ENCODE measurements at regions of chr15 and their contacts with region 1.

Region 1: DNA sequence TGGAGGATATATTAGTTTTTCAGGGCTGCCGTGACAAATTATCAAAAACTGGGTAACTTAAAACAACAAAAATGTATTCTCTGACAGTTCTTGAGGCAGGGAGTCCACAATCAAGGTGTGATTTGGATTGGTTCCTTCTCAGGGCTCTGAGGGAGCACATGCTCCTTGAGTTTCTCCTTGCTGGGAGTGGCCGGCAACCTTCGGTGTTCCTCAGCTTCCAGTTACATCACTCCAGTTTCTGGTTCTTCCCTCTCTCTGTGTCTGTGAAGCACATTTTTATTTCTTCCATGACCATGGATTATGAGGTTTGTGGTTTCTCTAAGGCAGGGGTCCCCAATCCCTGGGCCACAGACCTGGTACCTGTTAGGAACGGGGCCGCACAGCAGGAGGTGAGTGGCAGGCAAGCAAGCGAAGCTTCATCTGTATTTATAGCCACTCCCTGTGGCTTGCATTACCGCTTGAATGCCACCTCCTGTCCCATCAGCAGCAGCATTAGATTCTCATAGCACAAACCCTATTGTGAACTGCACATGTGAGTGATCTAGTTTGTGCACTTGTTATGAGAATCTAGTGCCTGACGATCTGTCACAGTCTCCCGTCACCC is 24.3 kb downstream of the LRRC28 start:
- DNase-seq: no peak
- H3K4me3 ChIP-seq: no peak overlapping the region
- H3K27ac ChIP-seq: no peak overlapping the region
- H3K4me1 ChIP-seq: no peaks in the 10 kb centered on the region
- H3K27me3 ChIP-seq: no peaks in the 10 kb centered on the region
- CTCF ChIP-seq: no peak
- POLR2A ChIP-seq: no peak

Region 2: DNA sequence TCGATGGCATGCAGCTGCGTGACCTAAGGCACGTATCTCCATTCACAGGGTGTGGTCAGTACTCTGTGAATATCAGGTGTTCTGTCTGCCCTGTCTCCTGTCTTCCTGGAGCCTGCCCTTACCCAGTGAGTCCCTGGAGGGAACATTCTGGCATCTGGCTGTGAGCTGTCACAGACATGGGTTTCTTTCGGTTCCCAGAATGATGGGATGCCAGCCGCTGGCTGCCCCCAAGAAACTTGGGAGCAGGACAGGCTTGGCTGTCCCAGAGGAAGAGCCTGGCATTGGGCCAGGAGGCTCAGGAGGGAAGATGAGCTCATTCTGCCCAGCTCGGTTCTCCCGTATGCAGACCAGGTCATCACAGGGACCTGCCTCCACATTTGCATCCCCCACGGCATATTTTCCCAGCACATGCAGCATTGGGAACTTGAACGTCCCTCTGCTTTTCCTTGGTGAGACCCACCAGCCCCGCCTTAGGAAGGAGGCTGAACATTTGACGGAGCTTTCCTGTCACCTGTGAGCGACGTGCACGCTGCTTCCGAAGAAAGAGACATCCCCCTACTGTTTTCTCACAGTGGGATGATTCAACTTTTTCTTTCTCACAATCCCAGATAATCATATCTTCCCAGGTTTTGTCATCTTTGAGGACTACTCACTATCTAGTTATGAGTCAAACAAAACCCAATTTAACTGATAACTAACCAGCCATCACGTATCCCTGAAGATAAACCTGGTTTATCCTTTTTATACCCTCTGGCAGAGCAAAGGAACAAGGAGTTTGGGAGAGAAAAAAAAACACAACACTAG is 246.1 kb before region 1 on chr15:
- intact Hi-C with region 1: no loop called
- DNase-seq: peak in 3 of 7 donors; percentile 30 to 53 (median 31)
- H3K4me3 ChIP-seq: no peak overlapping the region
- H3K27ac ChIP-seq: no peak overlapping the region
- H3K4me1 ChIP-seq: no peaks in the 10 kb centered on the region
- H3K27me3 ChIP-seq: no peaks in the 10 kb centered on the region
- CTCF ChIP-seq: no peak
- POLR2A ChIP-seq: no peak

Region 3: DNA sequence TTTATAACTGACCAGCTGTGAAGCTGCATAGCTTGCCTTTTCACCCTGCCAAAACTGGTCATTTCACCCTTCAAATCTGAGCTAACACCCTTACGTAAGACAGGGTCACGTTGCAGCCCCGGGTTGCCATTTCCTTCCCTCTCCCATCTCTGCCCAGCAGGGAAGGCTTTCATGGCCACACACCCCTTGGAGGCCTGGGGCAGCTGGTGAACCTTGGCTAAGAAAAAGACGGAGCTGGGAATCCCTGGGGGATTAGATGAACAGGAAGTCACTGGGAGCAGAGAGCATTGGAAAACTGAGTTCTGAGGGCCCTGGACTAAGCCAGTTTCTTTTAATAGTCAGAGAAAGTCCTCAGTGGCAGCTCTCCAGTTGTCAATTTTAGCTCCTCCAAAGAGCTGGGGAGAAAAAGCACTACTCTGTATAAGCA is 94.1 kb before region 1 on chr15:
- intact Hi-C with region 1: no loop called
- DNase-seq: peak in 6 of 7 donors; percentile 34 to 70 (median 54)
- H3K4me3 ChIP-seq: no peak overlapping the region
- H3K27ac ChIP-seq: peak overlapping the region in 2 of 5 donors; percentile 35 to 59
- H3K4me1 ChIP-seq: peaks cover 0 to 36% of the 10 kb centered on the region in 2 donors
- H3K27me3 ChIP-seq: no peaks in the 10 kb centered on the region
- CTCF ChIP-seq: no peak
- POLR2A ChIP-seq: no peak

Region 4: GRCh38 chr15:99755692-99756409 is 480.2 kb after region 1 on chr15:
- intact Hi-C with region 1: loop called (anchors 5 to 10 kb)
- DNase-seq: peak; percentile 40 to 68 (median 54)
- H3K4me3 ChIP-seq: no peak overlapping the region
- H3K27ac ChIP-seq: no peak overlapping the region
- H3K4me1 ChIP-seq: no peaks in the 10 kb centered on the region
- H3K27me3 ChIP-seq: no peaks in the 10 kb centered on the region
- CTCF ChIP-seq: peak; percentile 72 to 90 (median 78)
- POLR2A ChIP-seq: no peak